PC-3 (cell line): ENCODE measurements at regions of chr1 and their contacts with region 1.

Region 1: GRCh38 chr1:27671964-27672749 is at the start of gene IFI6:
- DNase-seq: peak; percentile 95
- ATAC-seq: peak; percentile 98
- H3K4me3 ChIP-seq: peak within 1 kb of the TSS; percentile 67
- H3K27ac ChIP-seq: peak within 1 kb of the TSS; percentile 3
- H3K4me1 ChIP-seq: peaks cover 13% of the 10 kb centered on the region; the same call in 1 of the 2 replicates
- H3K27me3 ChIP-seq: no peaks in the 10 kb centered on the region
- CTCF ChIP-seq: peak; percentile 50
- total RNA-seq, gene IFI6: 15.7 and 16.5 TPM in 2 replicates

Region 2: GRCh38 chr1:27555700-27556424 is 116.3 kb before region 1 on chr1:
- CTCF ChIA-PET with region 1: no interaction called
- POLR2A ChIA-PET with region 1: no interaction called
- intact Hi-C with region 1: no loop called
- DNase-seq: no peak
- ATAC-seq: no peak
- H3K4me3 ChIP-seq: no peak overlapping the region
- H3K27ac ChIP-seq: peak overlapping the region; percentile 14; the same call in 1 of the 2 replicates
- H3K4me1 ChIP-seq: peaks cover 21% of the 10 kb centered on the region
- H3K27me3 ChIP-seq: no peaks in the 10 kb centered on the region
- CTCF ChIP-seq: no peak

Region 3: GRCh38 chr1:27719286-27720251 is 47.4 kb after region 1 on chr1:
- CTCF ChIA-PET with region 1: interaction called, 20 read pairs
- POLR2A ChIA-PET with region 1: no interaction called
- intact Hi-C with region 1: loop called (anchors 1 kb)
- DNase-seq: peak; percentile 20
- ATAC-seq: peak; percentile 58
- H3K4me3 ChIP-seq: no peak overlapping the region
- H3K27ac ChIP-seq: no peak overlapping the region
- H3K4me1 ChIP-seq: no peaks in the 10 kb centered on the region
- H3K27me3 ChIP-seq: no peaks in the 10 kb centered on the region
- CTCF ChIP-seq: peak; percentile 54